ENCODE measurements at regions of chr1 and their contacts with region 1.

Region 1: DNA sequence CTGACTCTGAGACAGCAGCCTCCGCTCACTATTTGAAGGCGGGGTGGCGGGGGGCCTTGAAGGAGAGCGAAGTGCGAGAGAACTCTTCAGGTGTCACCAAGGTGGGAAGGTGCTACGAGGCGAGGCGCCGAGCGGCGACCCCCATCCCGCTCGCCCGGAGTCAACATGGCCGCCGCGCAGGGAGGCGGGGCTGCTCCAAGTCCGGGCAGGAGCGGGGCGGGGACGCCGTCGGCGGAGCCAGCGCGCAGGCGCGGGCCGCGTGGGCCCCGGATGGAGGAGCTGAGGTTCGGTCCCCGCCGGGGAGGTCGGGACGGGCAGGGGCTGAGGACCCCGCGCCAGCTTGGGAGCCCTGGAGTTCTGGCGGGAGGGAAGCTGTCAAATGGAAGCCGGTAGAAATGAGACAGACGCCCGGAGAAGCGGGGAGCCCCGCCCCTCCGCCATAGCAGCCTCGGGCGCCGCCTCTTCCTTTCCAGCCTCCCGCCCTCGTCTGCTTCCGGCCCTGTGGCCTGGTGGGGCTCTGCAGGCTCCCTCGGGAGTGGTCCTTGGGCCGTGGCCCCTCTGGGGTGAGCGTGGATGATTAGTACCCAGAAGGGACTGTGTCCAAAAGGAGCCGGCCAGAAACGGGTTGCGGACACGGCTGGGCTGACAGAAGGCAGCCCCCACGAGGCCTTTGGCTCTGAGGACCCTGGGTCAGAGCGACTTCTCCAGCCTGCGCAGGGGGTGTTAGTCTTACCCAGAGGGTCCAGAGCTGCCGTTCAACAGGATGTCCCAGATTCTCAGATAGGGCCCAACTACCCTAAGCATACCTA is at the start of gene PIGV:
- DNase-seq: peak; percentile 89 to 96
- H3K4me3 ChIP-seq: peak within 1 kb of the TSS; percentile 62 to 80 (median 72)
- H3K27ac ChIP-seq: peak within 1 kb of the TSS; percentile 97 to 100 (median 98)
- H3K4me1 ChIP-seq: peaks cover 43 to 76% (median 60%) of the 10 kb centered on the region in 4 donors
- H3K27me3 ChIP-seq: no peaks in the 10 kb centered on the region
- CTCF ChIP-seq: peak in 4 of 7 experiments; percentile 12 to 50 (median 29)
- EP300 ChIP-seq: no peak
- POLR2A ChIP-seq: peak in 1 of 4 donors; percentile 50
- total RNA-seq, gene PIGV: 0.87 to 30.8 (median 8.7) TPM in 4 of 5 donors, not detected in the other

Region 2: DNA sequence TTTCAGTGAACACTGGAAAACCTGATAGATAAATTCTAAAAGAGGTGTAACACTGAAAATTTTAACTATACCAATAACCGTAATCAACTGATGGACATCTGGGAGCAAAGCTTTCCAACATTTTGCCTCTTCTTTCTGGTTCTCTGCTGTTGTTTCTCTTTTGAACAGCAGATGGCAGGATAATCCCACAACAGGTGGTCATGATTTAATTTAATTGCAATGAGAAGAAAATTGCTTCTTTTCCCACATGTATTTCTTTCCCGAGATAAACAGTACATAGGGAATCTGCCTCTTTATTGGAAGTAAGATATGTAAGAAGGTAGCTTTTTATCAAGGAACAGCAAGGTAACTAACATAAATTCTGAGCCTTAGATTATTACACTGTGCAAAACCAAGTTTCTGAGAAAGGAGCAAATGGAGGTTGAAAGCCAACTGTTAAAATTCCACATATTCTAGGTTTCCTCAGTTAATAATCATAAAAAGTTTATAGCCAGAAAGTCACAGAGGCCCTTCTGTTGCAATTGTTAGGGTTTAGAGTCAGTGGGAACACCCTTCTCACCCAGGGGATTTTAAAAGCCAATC is 185.4 kb before region 1 on chr1:
- intact Hi-C with region 1: loop called (anchors 5 kb)
- DNase-seq: peak in 1 of 2 donors; percentile 87
- H3K4me3 ChIP-seq: no peak overlapping the region
- H3K27ac ChIP-seq: no peak overlapping the region
- H3K4me1 ChIP-seq: peaks cover 0 to 7% (median 3%) of the 10 kb centered on the region in 4 donors
- H3K27me3 ChIP-seq: no peaks in the 10 kb centered on the region
- CTCF ChIP-seq: peak in 5 of 7 experiments; percentile 80 to 92 (median 83)
- EP300 ChIP-seq: no peak
- POLR2A ChIP-seq: no peak

Region 3: DNA sequence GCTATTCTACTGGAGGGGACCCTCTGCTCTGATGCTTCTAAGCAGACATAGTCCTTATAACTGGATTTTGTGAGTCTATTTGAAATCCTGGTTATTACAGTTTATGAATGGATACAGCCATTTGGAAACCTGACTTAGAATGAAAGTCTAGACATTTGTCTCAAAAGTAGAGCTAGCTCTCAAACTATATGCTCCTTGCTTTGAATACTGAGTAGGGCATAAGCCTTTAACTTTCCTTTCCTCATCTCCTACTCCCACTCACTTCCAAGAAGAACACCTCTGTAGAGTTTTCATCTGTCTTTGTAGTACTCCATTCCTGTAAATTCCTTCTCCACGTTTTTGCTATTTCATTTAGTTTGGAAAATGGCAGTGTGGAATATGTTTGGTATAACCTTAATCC is 101.1 kb before region 1 on chr1:
- intact Hi-C with region 1: loop called (anchors 10 kb)
- DNase-seq: peak in 1 of 2 donors; percentile 47
- H3K4me3 ChIP-seq: no peak overlapping the region
- H3K27ac ChIP-seq: no peak overlapping the region
- H3K4me1 ChIP-seq: peaks cover 6 to 30% (median 15%) of the 10 kb centered on the region in 4 donors
- H3K27me3 ChIP-seq: no peaks in the 10 kb centered on the region
- CTCF ChIP-seq: no peak
- EP300 ChIP-seq: no peak
- POLR2A ChIP-seq: no peak

Region 4: DNA sequence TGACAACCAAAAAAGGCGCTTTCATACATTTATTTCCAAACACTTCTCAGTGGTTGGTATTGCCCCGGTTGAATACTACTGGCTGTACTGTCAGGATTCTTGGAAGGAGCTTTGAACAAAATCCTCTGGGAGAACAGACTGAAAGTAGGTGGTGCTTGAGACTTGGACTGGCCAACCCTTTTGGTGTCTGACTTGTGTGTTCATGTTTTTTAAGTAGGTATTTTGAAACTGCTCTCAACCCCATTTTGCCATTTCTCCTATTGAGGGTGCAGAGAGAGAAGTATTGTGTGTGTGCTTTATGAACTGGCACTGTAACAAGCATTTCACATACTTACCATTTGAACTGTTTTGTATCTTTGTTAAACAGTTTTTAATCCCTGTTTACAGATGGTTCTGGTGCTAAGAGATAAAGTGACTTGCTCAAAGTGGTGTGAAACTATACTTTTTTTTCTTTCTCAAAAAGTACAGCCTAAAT is 70.9 kb before region 1 on chr1:
- intact Hi-C with region 1: no loop called
- DNase-seq: no peak
- H3K4me3 ChIP-seq: no peak overlapping the region
- H3K27ac ChIP-seq: peak overlapping the region in 1 of 5 donors; percentile 70
- H3K4me1 ChIP-seq: peaks cover 64 to 100% (median 93%) of the 10 kb centered on the region in 4 donors
- H3K27me3 ChIP-seq: no peaks in the 10 kb centered on the region
- CTCF ChIP-seq: no peak
- EP300 ChIP-seq: no peak
- POLR2A ChIP-seq: no peak